GM12878 (cell line): ENCODE measurements at regions of chr16 and their contacts with region 1.

Region 1: GRCh38 chr16:1069154-1069553 is 3.4 kb upstream of the SSTR5 start:
- DNase-seq: no peak
- ATAC-seq: no peak
- H3K4me3 ChIP-seq: no peak overlapping the region
- H3K27ac ChIP-seq: no peak overlapping the region
- H3K4me1 ChIP-seq: no peaks in the 10 kb centered on the region
- H3K27me3 ChIP-seq: no peaks in the 10 kb centered on the region
- CTCF ChIP-seq: no peak
- EP300 ChIP-seq: no peak
- POLR2A ChIP-seq: no peak
- RAD21 ChIP-seq: no peak

Region 2: DNA sequence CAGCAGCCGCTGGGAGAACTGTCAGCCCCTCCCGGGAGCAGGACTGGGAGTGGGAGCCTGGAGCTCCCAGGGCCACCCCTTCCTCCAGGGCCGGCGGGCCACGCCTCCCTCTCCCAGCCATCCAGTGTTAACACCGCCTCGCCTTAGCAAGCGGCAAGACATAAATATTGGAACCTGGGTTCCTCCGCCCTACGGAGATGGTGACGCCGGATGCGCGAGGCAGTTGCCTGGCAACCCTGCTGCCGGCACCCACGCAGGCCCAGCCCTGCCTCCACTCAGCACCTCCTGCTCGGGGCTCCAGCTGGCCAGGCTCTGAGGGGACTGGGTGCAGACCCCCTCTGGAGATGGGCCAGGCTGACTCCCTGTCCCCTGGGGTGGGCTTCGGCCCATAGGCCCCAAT is 56.3 kb after region 1 on chr16:
- CTCF ChIA-PET with region 1: no interaction called
- POLR2A ChIA-PET with region 1: no interaction called
- RAD21 ChIA-PET with region 1: no interaction called
- SMC1A ChIA-PET with region 1: no interaction called
- in situ Hi-C with region 1: loop called (anchors 10 kb)
- intact Hi-C with region 1: no loop called
- DNase-seq: no peak
- ATAC-seq: no peak
- H3K4me3 ChIP-seq: no peak overlapping the region
- H3K27ac ChIP-seq: no peak overlapping the region
- H3K4me1 ChIP-seq: no peaks in the 10 kb centered on the region
- H3K27me3 ChIP-seq: no peaks in the 10 kb centered on the region
- CTCF ChIP-seq: no peak
- EP300 ChIP-seq: no peak
- POLR2A ChIP-seq: no peak
- RAD21 ChIP-seq: no peak